Activated B cell treated with CpG ODN at 0.5 μM for 24 hours (primary cell): ENCODE measurements at regions of chr16 and their contacts with region 1.

Region 1: GRCh38 chr16:66406534-66407221 is 20.4 kb upstream of the BEAN1 start:
- DNase-seq: peak; percentile 81
- ATAC-seq: peak; percentile 92
- H3K4me3 Mint-ChIP-seq: peak overlapping the region; percentile 69
- H3K27ac Mint-ChIP-seq: no peak overlapping the region
- H3K4me1 Mint-ChIP-seq: peaks cover 16% of the 10 kb centered on the region
- H3K27me3 Mint-ChIP-seq: peaks cover 34% of the 10 kb centered on the region
- CTCF ChIP-seq: no peak

Region 2: DNA sequence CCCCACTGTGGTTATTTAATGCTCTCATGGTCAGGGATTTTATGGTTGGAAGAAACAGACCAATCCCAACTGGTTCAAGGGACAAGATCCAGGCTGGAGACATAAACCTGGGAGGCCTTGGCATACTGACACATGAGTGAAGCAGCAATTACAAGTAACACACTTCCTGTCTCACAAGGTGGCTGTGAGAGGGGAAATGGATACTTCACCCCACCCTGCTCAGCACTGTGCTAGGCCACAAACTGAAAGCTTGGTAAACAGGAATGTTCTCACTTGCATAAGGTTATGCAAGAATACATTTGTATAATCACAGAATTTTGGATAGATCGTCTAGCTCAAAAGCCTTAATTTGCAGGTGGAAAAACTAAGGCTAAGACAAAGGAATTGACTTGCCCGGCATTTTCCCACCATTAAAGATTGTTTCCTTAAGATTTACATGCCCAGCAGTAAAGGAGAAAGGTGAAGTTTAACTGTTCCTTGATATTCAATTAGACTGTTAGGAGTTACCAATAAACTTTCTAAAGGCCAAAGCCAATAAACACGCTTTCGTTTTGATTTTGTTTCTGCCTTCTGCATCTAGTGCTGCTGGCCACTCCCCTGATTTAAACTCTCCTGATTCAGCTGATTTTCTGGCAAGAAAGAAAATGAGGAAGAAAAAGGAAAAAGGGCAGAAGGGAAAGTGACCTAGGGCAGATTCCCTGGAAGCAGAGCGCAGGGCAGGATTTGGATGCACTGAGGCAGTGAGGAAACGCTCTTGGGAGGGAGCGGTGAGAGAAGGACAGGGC is 255.8 kb before region 1 on chr16:
- CTCF ChIA-PET with region 1: no interaction called
- POLR2A ChIA-PET with region 1: no interaction called
- intact Hi-C with region 1: no loop called
- DNase-seq: no peak
- ATAC-seq: no peak
- H3K4me3 Mint-ChIP-seq: no peak overlapping the region
- H3K27ac Mint-ChIP-seq: no peak overlapping the region
- H3K4me1 Mint-ChIP-seq: no peaks in the 10 kb centered on the region
- H3K27me3 Mint-ChIP-seq: peaks cover 5% of the 10 kb centered on the region
- CTCF ChIP-seq: no peak

Region 3: GRCh38 chr16:66451548-66451947 is 44.9 kb after region 1 on chr16:
- CTCF ChIA-PET with region 1: no interaction called
- POLR2A ChIA-PET with region 1: no interaction called
- intact Hi-C with region 1: no loop called
- DNase-seq: no peak
- ATAC-seq: no peak
- H3K4me3 Mint-ChIP-seq: no peak overlapping the region
- H3K27ac Mint-ChIP-seq: no peak overlapping the region
- H3K4me1 Mint-ChIP-seq: no peaks in the 10 kb centered on the region
- H3K27me3 Mint-ChIP-seq: peaks cover 6% of the 10 kb centered on the region
- CTCF ChIP-seq: no peak

Region 4: GRCh38 chr16:66516808-66517585 is 110.3 kb after region 1 on chr16:
- CTCF ChIA-PET with region 1: interaction called, 3 read pairs
- POLR2A ChIA-PET with region 1: no interaction called
- intact Hi-C with region 1: loop called (anchors 2 kb)
- DNase-seq: peak; percentile 72
- ATAC-seq: peak; percentile 91
- H3K4me3 Mint-ChIP-seq: peak overlapping the region; percentile 90
- H3K27ac Mint-ChIP-seq: peak overlapping the region; percentile 99
- H3K4me1 Mint-ChIP-seq: peaks cover 66% of the 10 kb centered on the region
- H3K27me3 Mint-ChIP-seq: no peaks in the 10 kb centered on the region
- CTCF ChIP-seq: no peak

Region 5: DNA sequence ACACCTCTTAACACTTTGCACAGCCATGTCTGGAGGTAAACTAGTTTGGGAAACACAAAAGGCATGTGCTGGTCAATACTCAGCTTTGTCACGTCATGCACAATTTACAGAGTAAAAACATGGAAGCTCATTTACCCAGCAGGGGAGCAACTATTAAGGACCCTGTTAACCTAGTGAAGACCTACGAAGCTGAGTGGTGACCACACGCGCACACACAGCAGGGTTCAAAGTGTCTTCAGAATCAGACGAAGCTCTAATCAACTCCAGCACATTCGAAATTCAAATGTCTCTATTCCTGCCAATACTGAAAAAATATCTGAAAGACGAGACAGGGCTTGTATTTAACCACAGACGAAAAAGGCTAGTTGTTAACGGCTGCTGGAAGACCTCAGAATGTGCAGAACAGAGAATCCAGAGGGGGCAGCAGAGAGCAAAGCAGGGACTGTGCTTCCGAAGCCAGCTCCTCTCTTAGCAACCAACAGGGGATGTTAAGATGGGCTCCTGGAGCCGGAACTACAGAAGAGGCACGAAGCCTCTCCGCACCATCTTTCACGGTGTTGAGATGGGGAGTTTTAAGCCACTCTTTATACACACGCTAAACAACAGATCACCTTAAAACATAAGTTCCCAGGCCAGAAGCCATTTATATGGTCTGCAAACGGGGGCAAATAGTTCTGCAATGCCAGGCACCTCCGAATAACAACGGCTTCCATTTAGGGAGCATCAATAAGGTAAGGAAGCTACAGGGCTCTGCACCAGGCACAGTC is 244.2 kb after region 1 on chr16:
- CTCF ChIA-PET with region 1: interaction called, 3 read pairs
- POLR2A ChIA-PET with region 1: no interaction called
- intact Hi-C with region 1: loop called (anchors 5 kb)
- DNase-seq: peak; percentile 42
- ATAC-seq: peak; percentile 92
- H3K4me3 Mint-ChIP-seq: peak overlapping the region; percentile 66
- H3K27ac Mint-ChIP-seq: no peak overlapping the region
- H3K4me1 Mint-ChIP-seq: peaks cover 8% of the 10 kb centered on the region
- H3K27me3 Mint-ChIP-seq: peaks cover 25% of the 10 kb centered on the region
- CTCF ChIP-seq: peak; percentile 84

Region 6: DNA sequence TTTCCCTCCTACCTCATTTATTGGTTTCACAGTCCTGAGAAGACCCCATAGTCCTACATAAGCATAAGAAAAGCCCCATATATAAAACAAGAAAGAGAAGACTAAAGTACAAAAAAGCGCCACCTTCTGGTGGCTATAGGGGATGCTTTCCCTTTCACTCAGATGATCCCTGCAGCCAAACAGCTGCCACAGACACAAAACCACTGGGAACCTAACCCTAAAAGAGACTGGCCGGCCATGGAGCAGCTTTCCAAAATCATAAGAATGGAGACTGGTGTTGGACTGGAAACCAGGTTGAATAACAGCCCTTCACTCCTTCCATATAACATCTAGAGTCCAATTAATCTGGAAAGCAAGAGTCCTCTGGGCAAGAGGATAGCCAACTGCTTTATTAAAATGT is 333.3 kb after region 1 on chr16:
- CTCF ChIA-PET with region 1: interaction called, 8 read pairs
- POLR2A ChIA-PET with region 1: no interaction called
- intact Hi-C with region 1: loop called (anchors 1 kb)
- DNase-seq: no peak
- ATAC-seq: no peak
- H3K4me3 Mint-ChIP-seq: no peak overlapping the region
- H3K27ac Mint-ChIP-seq: no peak overlapping the region
- H3K4me1 Mint-ChIP-seq: peaks cover 4% of the 10 kb centered on the region
- H3K27me3 Mint-ChIP-seq: no peaks in the 10 kb centered on the region
- CTCF ChIP-seq: no peak